IMR-90 (cell line): ENCODE measurements at regions of chr4 and their contacts with region 1.

Region 1: DNA sequence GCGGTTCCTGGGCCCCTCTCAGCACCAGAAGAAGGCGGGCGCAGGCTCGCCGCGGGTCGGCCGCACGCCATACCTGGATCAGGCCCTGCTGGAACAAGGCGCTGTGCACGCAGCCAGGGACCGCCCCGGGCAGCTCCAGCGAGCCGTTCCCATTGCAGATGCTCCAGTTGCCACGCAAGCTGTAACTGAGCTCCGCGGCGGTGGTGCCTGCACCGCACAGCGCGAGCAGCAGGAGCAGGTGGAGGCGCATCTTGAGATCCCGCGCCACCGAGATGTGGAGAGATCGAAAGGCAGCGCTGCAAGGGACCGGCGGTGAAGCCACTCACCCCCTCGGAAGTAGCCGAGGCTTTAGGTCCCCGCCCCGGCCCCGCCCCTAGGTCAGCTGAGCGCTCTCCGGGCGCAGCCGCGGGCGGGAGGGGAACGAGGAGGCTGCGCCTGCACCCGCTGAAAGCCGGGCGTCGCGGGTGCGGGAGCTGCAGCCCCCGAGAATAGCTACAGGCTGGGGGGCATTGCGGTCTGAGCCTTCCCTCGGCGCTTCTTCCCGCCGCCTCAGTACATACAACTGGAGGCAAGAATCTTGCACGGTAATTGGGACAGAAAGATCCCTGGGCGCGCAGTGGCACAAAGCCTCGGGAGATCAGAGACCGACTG is at the start of gene MANBA:
- DNase-seq: peak; percentile 69
- ATAC-seq: peak; percentile 98
- H3K4me3 ChIP-seq: peak within 1 kb of the TSS; percentile 93
- H3K27ac ChIP-seq: peak within 1 kb of the TSS; percentile 67
- H3K4me1 ChIP-seq: peaks cover 5% of the 10 kb centered on the region
- H3K27me3 ChIP-seq: no peaks in the 10 kb centered on the region
- CTCF ChIP-seq: no peak
- POLR2A ChIP-seq: peak; percentile 58; the same call in 1 of the 2 replicates
- RAD21 ChIP-seq: no peak
- total RNA-seq, gene MANBA: 17.2 and 18.3 TPM in 2 replicates

Region 2: DNA sequence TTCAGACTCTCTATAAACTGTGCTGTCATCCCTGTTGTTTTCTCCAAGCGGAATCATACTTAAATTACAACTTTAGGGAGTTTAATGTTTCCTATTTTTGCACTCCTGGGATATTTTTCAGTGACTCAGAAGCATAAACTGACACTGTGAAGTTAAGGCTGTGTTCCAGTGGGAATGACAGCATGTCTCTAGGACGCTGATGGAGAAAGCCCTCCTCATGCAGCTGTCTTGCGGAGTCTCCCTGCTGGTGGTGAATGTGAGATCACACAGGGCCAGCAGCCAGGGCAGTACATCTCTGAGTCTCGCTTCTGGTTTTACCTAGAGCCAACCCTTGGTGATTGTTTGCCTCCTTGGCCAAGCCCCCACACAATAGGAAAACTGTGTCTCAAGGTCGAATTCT is 206.3 kb before region 1 on chr4:
- CTCF ChIA-PET with region 1: no interaction called
- POLR2A ChIA-PET with region 1: no interaction called
- dilution Hi-C with region 1: no loop called
- in situ Hi-C with region 1: no loop called
- intact Hi-C with region 1: no loop called
- DNase-seq: peak; percentile 92
- ATAC-seq: peak; percentile 97
- H3K4me3 ChIP-seq: no peak overlapping the region
- H3K27ac ChIP-seq: no peak overlapping the region
- H3K4me1 ChIP-seq: peaks cover 3% of the 10 kb centered on the region
- H3K27me3 ChIP-seq: no peaks in the 10 kb centered on the region
- CTCF ChIP-seq: no peak
- POLR2A ChIP-seq: no peak
- RAD21 ChIP-seq: no peak

Region 3: DNA sequence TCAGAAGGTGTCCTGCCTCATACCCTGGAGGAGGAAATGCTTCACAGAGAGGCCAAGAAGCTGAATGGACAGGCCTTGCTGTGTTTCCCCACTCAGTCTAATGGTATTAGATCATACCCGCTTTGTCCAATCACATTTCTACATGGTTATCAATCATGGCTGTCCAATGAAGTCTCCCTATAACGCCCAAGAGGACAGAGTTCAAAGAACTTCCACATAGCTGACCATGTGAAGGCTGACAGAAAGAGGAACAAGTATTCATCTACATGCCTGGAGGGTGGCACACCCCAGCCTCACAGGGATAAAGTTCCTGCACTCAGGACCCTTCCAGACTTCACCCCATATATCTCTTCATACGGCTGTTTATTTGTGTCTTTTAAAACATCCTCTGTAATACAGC is 123.4 kb before region 1 on chr4:
- CTCF ChIA-PET with region 1: no interaction called
- POLR2A ChIA-PET with region 1: no interaction called
- dilution Hi-C with region 1: no loop called
- in situ Hi-C with region 1: no loop called
- intact Hi-C with region 1: loop called (anchors 5 kb)
- DNase-seq: no peak
- ATAC-seq: no peak
- H3K4me3 ChIP-seq: no peak overlapping the region
- H3K27ac ChIP-seq: no peak overlapping the region
- H3K4me1 ChIP-seq: peaks cover 7% of the 10 kb centered on the region
- H3K27me3 ChIP-seq: no peaks in the 10 kb centered on the region
- CTCF ChIP-seq: no peak
- POLR2A ChIP-seq: no peak
- RAD21 ChIP-seq: no peak

Region 4: DNA sequence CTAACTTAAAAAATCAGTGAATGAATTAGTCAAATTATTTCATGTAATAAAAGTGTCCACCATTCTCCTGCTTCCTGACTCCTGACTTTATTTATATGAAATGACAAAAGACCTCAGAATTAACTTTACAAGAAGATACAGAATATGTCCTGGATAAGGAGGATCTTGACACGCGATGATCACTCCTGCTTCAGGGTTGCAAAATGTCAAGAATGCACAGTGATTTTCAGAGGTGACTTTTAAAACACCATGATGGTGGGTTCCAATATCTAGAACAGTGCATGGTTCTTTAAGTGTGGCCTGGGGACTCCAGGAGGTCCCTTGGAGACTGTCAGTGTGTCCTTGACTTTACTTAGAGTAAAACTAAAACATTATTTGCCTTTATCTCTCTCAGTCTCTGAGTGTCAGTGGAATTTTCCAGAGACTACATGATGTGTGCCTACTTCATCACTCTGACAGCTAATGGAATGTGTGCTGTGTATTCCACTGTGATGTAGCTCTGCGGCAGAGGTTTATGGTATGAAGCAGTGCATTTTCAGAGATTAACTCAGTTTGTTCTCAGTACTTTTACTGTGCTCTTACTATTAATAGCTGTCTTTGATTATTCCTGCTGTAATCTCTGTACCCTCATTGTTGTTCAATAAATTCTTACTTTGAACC is 85.8 kb before region 1 on chr4:
- CTCF ChIA-PET with region 1: no interaction called
- POLR2A ChIA-PET with region 1: no interaction called
- dilution Hi-C with region 1: no loop called
- in situ Hi-C with region 1: no loop called
- intact Hi-C with region 1: no loop called
- DNase-seq: peak; percentile 72
- ATAC-seq: peak; percentile 97
- H3K4me3 ChIP-seq: no peak overlapping the region
- H3K27ac ChIP-seq: no peak overlapping the region
- H3K4me1 ChIP-seq: peaks cover 3% of the 10 kb centered on the region
- H3K27me3 ChIP-seq: no peaks in the 10 kb centered on the region
- CTCF ChIP-seq: no peak
- POLR2A ChIP-seq: no peak
- RAD21 ChIP-seq: no peak

Region 5: GRCh38 chr4:102807345-102807744 is 46.6 kb after region 1 on chr4:
- CTCF ChIA-PET with region 1: no interaction called
- POLR2A ChIA-PET with region 1: interaction called, 16 read pairs
- dilution Hi-C with region 1: no loop called
- in situ Hi-C with region 1: no loop called
- intact Hi-C with region 1: no loop called
- DNase-seq: no peak
- ATAC-seq: no peak
- H3K4me3 ChIP-seq: no peak overlapping the region
- H3K27ac ChIP-seq: no peak overlapping the region
- H3K4me1 ChIP-seq: peaks cover 6% of the 10 kb centered on the region
- H3K27me3 ChIP-seq: no peaks in the 10 kb centered on the region
- CTCF ChIP-seq: no peak
- POLR2A ChIP-seq: no peak
- RAD21 ChIP-seq: no peak

Region 6: GRCh38 chr4:102815981-102816380 is 55.2 kb after region 1 on chr4:
- CTCF ChIA-PET with region 1: no interaction called
- POLR2A ChIA-PET with region 1: no interaction called
- dilution Hi-C with region 1: no loop called
- in situ Hi-C with region 1: no loop called
- intact Hi-C with region 1: loop called (anchors 2 kb)
- DNase-seq: peak; percentile 95
- ATAC-seq: peak; percentile 84
- H3K4me3 ChIP-seq: no peak overlapping the region
- H3K27ac ChIP-seq: peak overlapping the region; percentile 31; the same call in 1 of the 2 replicates
- H3K4me1 ChIP-seq: peaks cover 6% of the 10 kb centered on the region; the same call in 1 of the 2 replicates
- H3K27me3 ChIP-seq: no peaks in the 10 kb centered on the region
- CTCF ChIP-seq: no peak
- POLR2A ChIP-seq: no peak
- RAD21 ChIP-seq: no peak